ENCODE measurements at regions of chr10 and their contacts with region 1.

Region 1: GRCh38 chr10:54081950-54082349 is 719.1 kb downstream of the PCDH15 start:
- DNase-seq: no peak
- ATAC-seq: no peak
- H3K4me3 ChIP-seq: no peak overlapping the region
- H3K27ac ChIP-seq: no peak overlapping the region
- H3K4me1 ChIP-seq: no peaks in the 10 kb centered on the region
- H3K27me3 ChIP-seq: no peaks in the 10 kb centered on the region
- CTCF ChIP-seq: no peak
- EP300 ChIP-seq: no peak
- POLR2A ChIP-seq: no peak
- RAD21 ChIP-seq: no peak

Region 2: DNA sequence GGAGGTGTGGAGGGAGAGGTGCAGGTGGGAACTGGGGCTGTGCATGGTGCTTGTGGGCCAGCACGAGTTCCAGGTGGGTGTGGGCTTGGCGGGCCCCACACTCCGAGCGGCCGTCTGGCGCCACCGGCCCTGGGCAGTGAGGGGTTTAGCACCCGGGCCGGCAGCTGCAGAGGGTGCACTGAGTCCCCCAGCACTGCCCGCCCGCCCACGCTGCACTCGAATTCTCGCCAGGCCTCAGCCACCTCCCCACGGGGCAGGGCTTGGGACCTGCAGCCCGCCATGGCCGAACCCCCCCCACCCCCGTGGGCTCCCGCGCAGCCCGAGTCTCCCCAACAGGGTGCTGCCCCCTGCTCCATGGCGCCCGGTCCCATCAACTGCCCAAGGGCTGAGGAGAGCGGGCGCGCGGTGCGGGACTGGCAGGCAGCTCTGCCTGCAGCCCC is 91.1 kb before region 1 on chr10:
- CTCF ChIA-PET with region 1: no interaction called
- POLR2A ChIA-PET with region 1: no interaction called
- in situ Hi-C with region 1: no loop called
- intact Hi-C with region 1: no loop called
- DNase-seq: no peak
- ATAC-seq: no peak
- H3K4me3 ChIP-seq: no peak overlapping the region
- H3K27ac ChIP-seq: no peak overlapping the region
- H3K4me1 ChIP-seq: no peaks in the 10 kb centered on the region
- H3K27me3 ChIP-seq: no peaks in the 10 kb centered on the region
- CTCF ChIP-seq: no peak
- EP300 ChIP-seq: no peak
- POLR2A ChIP-seq: no peak
- RAD21 ChIP-seq: no peak

Region 3: DNA sequence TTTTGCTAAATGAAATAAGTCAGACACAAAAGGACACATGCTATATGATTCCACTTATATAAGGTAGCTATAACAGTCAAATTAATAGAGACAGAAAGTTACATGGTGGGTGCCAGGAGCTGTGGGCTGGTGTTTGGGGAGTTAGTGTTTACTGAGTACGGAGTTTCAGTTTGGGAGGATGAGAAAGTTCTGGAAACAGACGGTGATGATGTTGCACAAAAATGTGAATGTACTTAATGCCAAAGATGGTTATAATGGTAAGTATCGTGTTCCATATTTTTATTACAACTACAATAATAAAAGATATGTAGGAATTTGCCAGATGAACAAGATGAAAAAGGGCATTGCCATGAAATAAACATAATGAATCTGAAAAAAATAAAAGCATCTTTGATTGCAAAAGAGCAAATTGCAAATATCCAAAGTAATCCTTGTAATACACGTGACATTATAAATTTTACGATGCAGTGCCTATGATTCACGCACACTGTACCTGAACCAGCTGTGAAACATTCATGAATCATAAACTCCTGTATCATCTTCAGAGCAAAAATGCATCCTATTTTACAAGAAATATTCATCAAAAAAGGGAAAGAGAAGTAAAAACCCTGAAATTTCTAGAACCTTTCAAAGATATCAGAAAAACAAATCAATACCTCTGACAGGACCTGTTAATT is 42.4 kb after region 1 on chr10:
- CTCF ChIA-PET with region 1: no interaction called
- POLR2A ChIA-PET with region 1: no interaction called
- in situ Hi-C with region 1: no loop called
- intact Hi-C with region 1: no loop called
- DNase-seq: no peak
- ATAC-seq: no peak
- H3K4me3 ChIP-seq: no peak overlapping the region
- H3K27ac ChIP-seq: no peak overlapping the region
- H3K4me1 ChIP-seq: no peaks in the 10 kb centered on the region
- H3K27me3 ChIP-seq: no peaks in the 10 kb centered on the region
- CTCF ChIP-seq: no peak
- EP300 ChIP-seq: no peak
- POLR2A ChIP-seq: no peak
- RAD21 ChIP-seq: no peak

Region 4: GRCh38 chr10:55704944-55705343 is 1623.0 kb after region 1 on chr10:
- CTCF ChIA-PET with region 1: no interaction called
- POLR2A ChIA-PET with region 1: no interaction called
- in situ Hi-C with region 1: no loop called
- intact Hi-C with region 1: loop called (anchors 10 kb)
- DNase-seq: no peak
- ATAC-seq: no peak
- H3K4me3 ChIP-seq: no peak overlapping the region
- H3K27ac ChIP-seq: no peak overlapping the region
- H3K4me1 ChIP-seq: no peaks in the 10 kb centered on the region
- H3K27me3 ChIP-seq: no peaks in the 10 kb centered on the region
- CTCF ChIP-seq: no peak
- EP300 ChIP-seq: no peak
- POLR2A ChIP-seq: no peak
- RAD21 ChIP-seq: no peak

Measured in HepG2 (cell line).